ENCODE measurements at regions of chr14 and their contacts with region 1.

Region 1: GRCh38 chr14:23327947-23328744 is 6.9 kb downstream of the PABPN1 start:
- DNase-seq: no peak
- ATAC-seq: peak; percentile 68

Region 2: GRCh38 chr14:23379366-23380196 is 51.4 kb after region 1 on chr14:
- intact Hi-C with region 1: loop called (anchors 1 kb)
- DNase-seq: peak; percentile 84
- ATAC-seq: peak; percentile 46